PC-9 (cell line): ENCODE measurements at regions of chr3 and their contacts with region 1.

Region 1: GRCh38 chr3:194141415-194142155 is 5.6 kb downstream of the HES1 start:
- DNase-seq: peak; percentile 97
- H3K4me3 ChIP-seq: peak overlapping the region; percentile 46; the same call in 1 of the 2 replicates
- H3K27ac ChIP-seq: peak overlapping the region; percentile 99
- H3K4me1 ChIP-seq: peaks cover 65% of the 10 kb centered on the region
- H3K27me3 ChIP-seq: no peaks in the 10 kb centered on the region
- CTCF ChIP-seq: 0 out of 2 replicates have a peak, but pooled peaks have one; percentile 37

Region 2: GRCh38 chr3:193851941-193852674 is 289.5 kb before region 1 on chr3:
- CTCF ChIA-PET with region 1: no interaction called
- POLR2A ChIA-PET with region 1: interaction called, 18 read pairs
- intact Hi-C with region 1: no loop called
- DNase-seq: peak; percentile 82 to 98
- H3K4me3 ChIP-seq: peak overlapping the region; percentile 49
- H3K27ac ChIP-seq: peak overlapping the region; percentile 98
- H3K4me1 ChIP-seq: peaks cover 70% of the 10 kb centered on the region
- H3K27me3 ChIP-seq: no peaks in the 10 kb centered on the region
- CTCF ChIP-seq: no peak

Region 3: DNA sequence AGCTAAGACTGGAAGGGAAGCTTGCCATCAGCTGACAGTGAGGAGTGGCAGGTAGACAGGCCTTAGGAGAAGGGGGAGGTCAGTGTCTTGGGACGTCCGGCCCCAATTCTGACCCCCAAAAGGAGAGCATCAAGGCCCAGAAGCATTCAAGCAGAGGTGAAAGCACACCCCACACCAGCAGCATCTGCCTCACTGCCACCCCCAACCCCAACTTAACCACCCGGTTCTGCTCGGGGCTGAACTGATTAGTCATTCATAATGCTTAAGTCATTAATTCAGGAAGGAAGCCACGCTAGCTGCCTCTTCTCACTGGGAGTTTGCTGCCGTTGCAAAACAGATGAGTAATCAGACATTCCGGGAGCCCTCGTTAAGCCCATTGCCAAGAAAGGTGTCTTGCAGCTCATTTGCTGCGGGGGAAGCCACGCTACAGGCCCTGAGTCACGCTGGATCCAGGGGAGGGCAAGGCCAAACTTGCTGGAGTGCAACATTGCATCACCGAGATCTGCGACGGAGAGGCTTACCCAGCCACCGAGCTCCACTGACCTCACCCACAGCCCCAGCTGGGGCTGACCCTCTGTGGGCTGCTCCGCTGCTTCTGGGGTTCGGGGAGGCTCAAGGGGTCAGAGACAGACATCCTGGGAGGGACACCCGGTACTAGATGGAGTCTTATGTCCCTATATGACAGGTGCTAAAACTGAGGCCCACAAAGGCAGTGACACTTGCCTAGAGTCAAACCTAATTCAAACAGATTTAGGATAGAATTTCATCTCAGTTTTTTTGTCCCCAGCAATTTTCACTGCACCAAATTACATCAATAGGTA is 52.0 kb before region 1 on chr3:
- CTCF ChIA-PET with region 1: interaction called, 3 read pairs
- POLR2A ChIA-PET with region 1: interaction called, 10 read pairs
- intact Hi-C with region 1: no loop called
- DNase-seq: peak; percentile 98 to 100
- H3K4me3 ChIP-seq: peak overlapping the region; percentile 16; the same call in 1 of the 2 replicates
- H3K27ac ChIP-seq: peak overlapping the region; percentile 98
- H3K4me1 ChIP-seq: peaks cover 48% of the 10 kb centered on the region
- H3K27me3 ChIP-seq: no peaks in the 10 kb centered on the region
- CTCF ChIP-seq: no peak

Region 4: DNA sequence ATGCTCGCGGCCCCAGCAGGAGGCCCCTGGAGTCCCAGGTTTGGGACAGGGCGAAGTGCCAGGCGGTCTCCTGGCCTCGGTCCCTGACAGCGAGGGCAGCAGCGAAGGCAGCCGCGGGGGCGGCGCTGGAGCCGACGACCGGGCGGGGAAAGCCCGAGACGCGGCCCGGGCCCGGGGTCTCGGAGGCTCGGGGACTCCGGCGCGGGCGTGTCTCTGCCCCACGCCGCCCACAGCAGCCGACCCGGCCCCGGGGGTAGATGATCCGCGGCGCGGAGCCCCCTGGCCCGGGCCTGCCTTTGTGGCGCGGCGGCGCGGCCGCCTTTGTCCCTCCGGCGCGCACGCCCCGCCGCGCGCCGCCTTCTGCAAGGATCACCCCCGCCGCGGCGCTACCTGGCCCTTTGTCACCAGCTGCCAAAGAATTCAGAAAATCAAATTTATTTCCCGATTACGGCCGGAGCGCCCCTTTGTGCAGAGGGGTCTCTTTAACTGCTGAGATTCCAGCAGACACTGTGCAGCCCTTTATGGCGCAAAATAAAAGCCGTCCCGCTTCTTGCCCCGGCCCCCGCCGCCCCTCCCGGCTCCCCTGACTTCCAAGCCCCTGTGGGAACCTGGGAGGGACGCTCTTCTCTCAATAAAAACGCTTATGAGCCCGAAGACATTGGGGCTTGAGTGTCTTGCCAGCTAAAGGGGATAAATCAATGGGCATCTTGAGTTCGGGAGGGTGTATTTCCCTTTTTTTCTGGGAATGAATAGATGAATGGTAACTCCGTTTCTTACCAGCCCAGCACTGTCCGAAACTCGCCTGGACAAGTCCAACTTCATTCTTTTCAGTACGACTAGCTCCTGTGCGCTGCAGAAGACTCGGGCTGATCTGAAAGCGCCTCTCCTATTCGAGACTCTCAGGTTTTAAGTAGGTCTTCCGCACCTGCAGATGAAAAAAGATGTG is 62.7 kb after region 1 on chr3:
- CTCF ChIA-PET with region 1: interaction called, 3 read pairs
- POLR2A ChIA-PET with region 1: interaction called, 14 read pairs
- intact Hi-C with region 1: loop called (anchors 1 kb)
- DNase-seq: peak; percentile 62 to 78
- H3K4me3 ChIP-seq: peak overlapping the region; percentile 58
- H3K27ac ChIP-seq: peak overlapping the region; percentile 71
- H3K4me1 ChIP-seq: peaks cover 47% of the 10 kb centered on the region
- H3K27me3 ChIP-seq: no peaks in the 10 kb centered on the region
- CTCF ChIP-seq: no peak

Region 5: DNA sequence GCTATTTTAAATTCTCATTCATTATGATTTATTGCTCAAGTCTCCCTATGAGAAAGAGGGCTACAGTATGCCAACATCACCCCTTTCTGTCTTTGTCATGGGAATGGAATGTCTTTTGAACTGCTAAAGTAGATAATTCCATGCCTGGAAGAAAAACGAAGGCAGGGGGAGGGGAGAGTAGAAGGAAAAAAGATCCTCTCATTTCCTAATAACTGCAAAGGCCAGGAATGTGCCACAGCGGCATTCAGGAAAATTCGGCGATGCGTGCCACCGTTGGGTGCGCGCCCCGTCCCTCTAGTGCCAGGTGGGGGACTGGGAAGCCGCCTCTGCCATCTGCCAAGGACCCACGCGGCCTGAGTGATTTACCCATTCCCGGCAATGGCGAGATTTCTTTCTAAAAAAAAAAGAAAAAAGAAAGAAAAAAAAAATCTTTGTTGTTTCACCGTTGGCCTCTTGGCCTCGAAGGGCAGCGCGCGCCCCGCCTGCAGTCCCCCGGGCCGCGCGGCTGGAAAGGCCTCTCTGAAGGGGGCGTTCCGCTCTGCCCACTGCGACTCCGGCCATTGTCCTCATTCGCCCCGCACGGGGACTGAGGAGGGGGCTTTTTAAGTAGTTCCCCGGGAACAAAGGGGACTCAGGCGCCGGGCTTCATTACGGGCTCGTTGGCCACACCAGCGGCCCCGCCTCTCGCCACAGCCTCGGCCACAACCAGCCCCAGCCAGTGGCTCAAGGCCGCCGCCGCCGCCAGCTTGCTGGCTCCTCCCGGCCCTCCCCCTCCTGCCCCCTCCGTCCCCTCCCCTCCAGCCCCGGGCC is 155.1 kb after region 1 on chr3:
- CTCF ChIA-PET with region 1: no interaction called
- POLR2A ChIA-PET with region 1: interaction called, 21 read pairs
- intact Hi-C with region 1: loop called (anchors 1 kb)
- DNase-seq: peak; percentile 94 to 98
- H3K4me3 ChIP-seq: peak overlapping the region; percentile 57
- H3K27ac ChIP-seq: peak overlapping the region; percentile 97
- H3K4me1 ChIP-seq: peaks cover 65% of the 10 kb centered on the region
- H3K27me3 ChIP-seq: no peaks in the 10 kb centered on the region
- CTCF ChIP-seq: peak; percentile 30; the same call in 1 of the 2 replicates

Region 6: DNA sequence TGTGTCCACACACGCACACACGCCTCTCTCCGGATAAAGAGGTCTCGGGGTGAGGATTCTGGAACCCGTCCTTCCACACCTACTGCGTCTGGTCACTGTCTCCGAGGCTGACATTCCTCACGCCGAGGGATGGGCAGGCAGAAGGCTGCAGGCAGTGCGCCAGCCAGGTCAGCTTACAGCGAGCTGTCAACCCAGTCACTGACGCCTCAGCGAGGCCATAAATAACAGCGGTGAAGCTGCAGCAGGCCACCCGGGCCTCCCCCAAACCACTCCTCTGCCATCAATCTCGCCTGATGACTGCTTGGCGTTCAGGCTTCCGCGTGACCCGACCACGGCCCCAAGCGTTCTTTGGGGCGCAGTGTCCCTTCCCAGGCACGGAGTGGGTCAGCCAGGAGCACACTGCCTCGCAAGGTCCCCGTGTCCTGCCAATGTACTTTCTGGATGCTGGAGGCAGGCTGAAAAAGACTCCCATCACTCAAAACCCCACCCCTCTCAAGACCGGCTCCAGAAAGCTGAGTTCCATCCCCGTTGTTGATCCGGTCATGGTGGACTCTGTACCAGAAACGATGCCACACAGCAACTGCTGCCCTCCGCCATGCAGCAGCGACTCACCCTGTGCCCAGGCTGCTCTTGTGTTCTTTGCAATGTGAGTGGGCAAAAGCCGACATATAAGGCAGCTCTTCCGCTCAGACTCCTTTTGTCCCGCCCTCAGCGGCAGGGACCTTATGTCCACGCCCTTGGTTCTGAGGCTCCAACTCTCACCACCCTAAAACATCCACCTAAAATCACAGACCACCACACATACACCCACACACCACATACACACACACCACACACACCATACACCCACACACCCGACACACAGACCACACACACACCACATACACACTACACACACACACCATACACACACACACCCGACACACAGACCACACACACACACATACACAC is 182.5 kb after region 1 on chr3:
- CTCF ChIA-PET with region 1: interaction called, 3 read pairs
- POLR2A ChIA-PET with region 1: interaction called, 39 read pairs
- intact Hi-C with region 1: loop called (anchors 1 kb)
- DNase-seq: peak; percentile 60 to 72
- H3K4me3 ChIP-seq: no peak overlapping the region
- H3K27ac ChIP-seq: peak overlapping the region; percentile 98
- H3K4me1 ChIP-seq: peaks cover 39% of the 10 kb centered on the region
- H3K27me3 ChIP-seq: no peaks in the 10 kb centered on the region
- CTCF ChIP-seq: no peak

Region 7: DNA sequence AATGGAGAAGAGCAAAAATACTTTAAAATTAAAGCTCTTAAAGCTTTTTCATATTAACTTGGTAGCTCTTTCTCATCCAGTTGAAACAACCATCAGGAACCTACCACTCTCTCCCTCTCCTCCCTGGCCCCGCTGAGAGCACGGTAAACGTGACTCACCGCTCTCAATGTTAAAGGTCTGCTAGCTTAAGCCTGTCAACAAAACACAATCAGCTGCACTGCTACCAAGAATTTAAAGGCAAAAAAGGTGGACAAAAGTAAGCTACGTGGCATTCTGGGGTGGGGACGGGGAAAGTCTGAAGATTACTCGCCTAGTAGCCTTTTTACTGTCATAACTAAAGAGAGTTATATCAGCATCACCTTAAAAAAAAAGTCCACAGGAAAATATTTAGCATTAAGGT is 265.8 kb after region 1 on chr3:
- CTCF ChIA-PET with region 1: no interaction called
- POLR2A ChIA-PET with region 1: no interaction called
- intact Hi-C with region 1: no loop called
- DNase-seq: no peak
- H3K4me3 ChIP-seq: no peak overlapping the region
- H3K27ac ChIP-seq: no peak overlapping the region
- H3K4me1 ChIP-seq: no peaks in the 10 kb centered on the region
- H3K27me3 ChIP-seq: no peaks in the 10 kb centered on the region
- CTCF ChIP-seq: no peak